ENCODE measurements at regions of chr11 and their contacts with region 1.

Region 1: GRCh38 chr11:18012863-18013781 is at the start of gene SERGEF:
- DNase-seq: peak; percentile 96
- ATAC-seq: peak; percentile 93
- H3K4me3 Mint-ChIP-seq: peak within 1 kb of the TSS; percentile 85
- H3K27ac Mint-ChIP-seq: peak within 1 kb of the TSS; percentile 98
- H3K4me1 Mint-ChIP-seq: peaks cover 39% of the 10 kb centered on the region
- H3K27me3 Mint-ChIP-seq: no peaks in the 10 kb centered on the region
- total RNA-seq, gene SERGEF: 47.5 to 57.5 TPM

Region 2: GRCh38 chr11:16738193-16738946 is 1274.8 kb before region 1 on chr11 and contains the start of gene C11orf58:
- CTCF ChIA-PET with region 1: no interaction called
- POLR2A ChIA-PET with region 1: no interaction called
- intact Hi-C with region 1: loop called (anchors 1 to 5 kb)
- DNase-seq: peak; percentile 96
- ATAC-seq: peak; percentile 97
- H3K4me3 Mint-ChIP-seq: no peak within 1 kb of the TSS
- H3K27ac Mint-ChIP-seq: peak within 1 kb of the TSS; percentile 92
- H3K4me1 Mint-ChIP-seq: peaks cover 23% of the 10 kb centered on the region
- H3K27me3 Mint-ChIP-seq: no peaks in the 10 kb centered on the region
- total RNA-seq, gene C11orf58: 142 to 193 TPM

Region 3: DNA sequence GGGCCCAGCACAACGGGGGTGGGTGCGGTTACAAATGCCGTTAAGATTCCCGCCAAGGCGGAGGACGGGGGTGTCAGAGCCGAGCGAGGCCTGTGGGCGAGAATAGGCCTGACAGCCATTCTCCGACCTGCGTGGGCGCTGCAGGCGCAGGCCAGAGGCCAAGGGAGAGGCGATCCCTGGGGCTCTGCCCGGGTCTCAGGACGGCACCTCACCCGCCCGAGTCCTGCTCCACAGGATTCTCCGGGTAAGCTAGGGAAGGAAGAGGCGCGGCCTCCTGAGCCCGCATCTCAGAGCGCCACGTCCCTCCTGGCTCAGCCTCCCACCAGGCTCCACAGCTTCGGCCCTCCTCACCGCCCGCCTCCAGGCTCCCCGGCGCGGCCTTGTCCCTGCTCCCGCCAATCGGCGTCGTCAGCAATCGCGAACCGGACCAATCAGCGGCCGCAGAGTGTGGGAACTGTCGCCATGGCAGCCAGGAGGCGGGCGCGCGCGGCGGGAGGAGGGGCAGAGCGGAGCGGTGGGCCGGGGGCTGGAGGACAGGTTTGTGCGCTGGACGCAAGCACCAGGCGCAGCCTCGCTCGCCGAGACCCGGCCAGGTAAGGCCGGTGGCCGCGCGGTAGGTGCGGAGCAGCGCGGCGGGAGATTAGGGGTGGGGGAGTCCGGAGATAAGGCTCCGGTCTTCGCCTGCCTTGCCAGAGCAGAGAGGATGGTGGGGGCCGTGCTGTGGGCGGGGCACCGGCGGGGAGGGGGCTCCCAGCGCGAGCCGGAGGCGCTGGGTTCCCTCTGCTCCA is 736.7 kb before region 1 on chr11 and contains the start of gene NUCB2:
- CTCF ChIA-PET with region 1: no interaction called
- POLR2A ChIA-PET with region 1: no interaction called
- intact Hi-C with region 1: loop called in 1 of 2 experiments (anchors 1 kb)
- DNase-seq: peak; percentile 99
- ATAC-seq: peak; percentile 92
- H3K4me3 Mint-ChIP-seq: peak within 1 kb of the TSS; percentile 75
- H3K27ac Mint-ChIP-seq: peak within 1 kb of the TSS; percentile 96
- H3K4me1 Mint-ChIP-seq: peaks cover 36% of the 10 kb centered on the region
- H3K27me3 Mint-ChIP-seq: no peaks in the 10 kb centered on the region
- total RNA-seq, gene NUCB2: 45.0 to 59.9 TPM

Region 4: DNA sequence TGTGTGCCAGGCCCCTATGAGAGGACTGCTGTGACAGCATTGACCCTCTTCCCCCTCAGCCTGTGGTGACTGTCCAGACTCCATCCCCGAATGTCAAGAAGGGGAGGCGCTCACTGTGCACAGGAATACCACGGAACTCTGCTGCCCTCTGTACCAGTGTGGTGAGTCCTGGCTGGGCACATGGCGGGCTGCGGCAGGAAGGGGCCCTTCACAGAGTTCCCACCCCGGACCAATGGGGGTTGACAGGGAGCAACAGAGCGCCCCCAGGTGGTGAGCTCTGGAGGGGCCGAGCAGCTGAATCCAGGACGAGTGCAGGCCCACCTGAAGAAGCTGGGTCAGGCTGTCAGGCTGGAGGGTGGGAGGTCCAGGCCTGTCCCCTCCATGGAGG is 377.6 kb before region 1 on chr11:
- CTCF ChIA-PET with region 1: no interaction called
- POLR2A ChIA-PET with region 1: no interaction called
- intact Hi-C with region 1: no loop called
- DNase-seq: no peak
- ATAC-seq: no peak
- H3K4me3 Mint-ChIP-seq: no peak overlapping the region
- H3K27ac Mint-ChIP-seq: no peak overlapping the region
- H3K4me1 Mint-ChIP-seq: no peaks in the 10 kb centered on the region
- H3K27me3 Mint-ChIP-seq: peaks cover 6% of the 10 kb centered on the region

Region 5: DNA sequence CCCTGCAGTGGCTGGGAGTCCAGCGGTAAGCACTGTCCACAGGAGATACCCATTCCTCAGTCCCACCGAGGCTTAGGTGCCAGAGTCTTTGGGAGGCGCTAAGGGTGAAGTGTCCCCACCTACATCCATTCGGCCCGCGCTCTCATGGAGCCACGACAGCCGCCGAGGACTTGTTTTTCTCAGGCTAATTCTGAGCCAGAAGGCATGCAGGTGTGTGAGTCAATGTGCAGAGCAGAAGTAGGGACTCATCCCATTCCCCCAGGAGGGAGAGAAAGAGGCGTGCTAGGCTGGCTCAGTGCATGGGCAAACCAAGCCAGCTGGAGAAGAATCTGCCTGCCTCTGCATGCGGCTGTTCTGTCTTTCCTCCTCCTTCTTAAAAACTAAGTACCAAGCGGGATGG is 231.9 kb before region 1 on chr11:
- CTCF ChIA-PET with region 1: no interaction called
- POLR2A ChIA-PET with region 1: no interaction called
- intact Hi-C with region 1: no loop called
- DNase-seq: no peak
- ATAC-seq: no peak
- H3K4me3 Mint-ChIP-seq: no peak overlapping the region
- H3K27ac Mint-ChIP-seq: no peak overlapping the region
- H3K4me1 Mint-ChIP-seq: no peaks in the 10 kb centered on the region
- H3K27me3 Mint-ChIP-seq: no peaks in the 10 kb centered on the region

Region 6: DNA sequence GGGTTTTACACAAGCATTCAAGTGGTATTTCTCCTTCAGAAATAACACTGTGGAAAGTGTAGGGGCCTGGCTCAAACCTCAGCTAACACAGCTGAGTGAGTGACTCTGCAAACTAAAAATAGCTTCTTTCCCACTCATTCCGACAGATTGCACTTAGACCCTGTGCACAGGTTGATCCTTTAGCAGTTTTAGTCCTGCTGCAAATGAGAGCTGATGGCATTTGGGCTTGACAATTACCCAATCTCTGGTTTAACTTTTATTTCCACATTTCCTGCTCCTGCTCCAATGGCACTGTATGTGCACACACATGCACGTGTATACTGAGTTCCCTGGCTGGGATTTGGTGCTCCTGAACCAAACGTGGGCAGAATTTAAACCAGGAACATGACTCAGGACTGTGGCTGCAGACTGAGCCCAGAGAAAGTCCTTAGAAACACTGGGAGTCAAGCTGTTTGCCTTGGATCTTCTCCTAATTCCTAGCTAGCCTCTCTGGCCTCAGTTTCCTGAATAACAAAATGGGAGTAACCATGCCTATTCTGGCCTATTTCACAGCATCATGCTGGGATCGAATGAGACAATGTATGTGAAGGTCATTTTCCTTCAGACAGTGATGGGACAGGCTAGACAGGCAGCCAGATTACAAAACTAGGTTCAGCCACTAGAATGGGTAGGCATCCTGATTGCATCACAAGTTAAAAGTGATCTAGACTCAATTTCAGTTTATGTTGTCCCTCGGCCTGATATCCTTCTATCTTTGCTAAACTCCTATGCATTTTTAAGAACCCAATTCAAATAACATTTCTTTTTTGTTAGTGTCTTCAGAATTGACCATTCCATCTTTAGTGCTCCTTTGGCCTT is 58.5 kb before region 1 on chr11:
- CTCF ChIA-PET with region 1: no interaction called
- POLR2A ChIA-PET with region 1: no interaction called
- intact Hi-C with region 1: no loop called
- DNase-seq: no peak
- ATAC-seq: no peak
- H3K4me3 Mint-ChIP-seq: no peak overlapping the region
- H3K27ac Mint-ChIP-seq: no peak overlapping the region
- H3K4me1 Mint-ChIP-seq: no peaks in the 10 kb centered on the region
- H3K27me3 Mint-ChIP-seq: no peaks in the 10 kb centered on the region

Region 7: GRCh38 chr11:17978553-17979287 is 34.4 kb before region 1 on chr11:
- CTCF ChIA-PET with region 1: no interaction called
- POLR2A ChIA-PET with region 1: no interaction called
- intact Hi-C with region 1: no loop called
- DNase-seq: peak; percentile 57
- ATAC-seq: no peak
- H3K4me3 Mint-ChIP-seq: no peak overlapping the region
- H3K27ac Mint-ChIP-seq: no peak overlapping the region
- H3K4me1 Mint-ChIP-seq: no peaks in the 10 kb centered on the region
- H3K27me3 Mint-ChIP-seq: no peaks in the 10 kb centered on the region

Region 8: GRCh38 chr11:18105802-18106574 is 92.9 kb after region 1 on chr11 and contains the start of gene SAAL1:
- CTCF ChIA-PET with region 1: interaction called, 4 read pairs
- POLR2A ChIA-PET with region 1: no interaction called
- intact Hi-C with region 1: loop called (anchors 1 kb)
- DNase-seq: peak; percentile 95
- ATAC-seq: peak; percentile 97
- H3K4me3 Mint-ChIP-seq: peak within 1 kb of the TSS; percentile 82
- H3K27ac Mint-ChIP-seq: peak within 1 kb of the TSS; percentile 85
- H3K4me1 Mint-ChIP-seq: peaks cover 37% of the 10 kb centered on the region
- H3K27me3 Mint-ChIP-seq: peaks cover 3% of the 10 kb centered on the region
- total RNA-seq, gene SAAL1: 37.4 to 40.9 TPM

Region 9: GRCh38 chr11:19116971-19117750 is 1104.0 kb after region 1 on chr11 and contains the start of gene ZDHHC13:
- CTCF ChIA-PET with region 1: no interaction called
- POLR2A ChIA-PET with region 1: no interaction called
- intact Hi-C with region 1: loop called in 1 of 2 experiments (anchors 5 kb)
- DNase-seq: peak; percentile 97
- ATAC-seq: peak; percentile 99
- H3K4me3 Mint-ChIP-seq: peak within 1 kb of the TSS; percentile 89
- H3K27ac Mint-ChIP-seq: peak within 1 kb of the TSS; percentile 87
- H3K4me1 Mint-ChIP-seq: peaks cover 51% of the 10 kb centered on the region
- H3K27me3 Mint-ChIP-seq: no peaks in the 10 kb centered on the region
- total RNA-seq, gene ZDHHC13: 22.9 to 25.9 TPM